ENCODE measurements at regions of chr19 and their contacts with region 1.

Region 1: GRCh38 chr19:46860125-46860845 is 512 bp upstream of the ARHGAP35 start:
- DNase-seq: peak; percentile 98
- H3K4me3 ChIP-seq: peak overlapping the region; percentile 92 to 99
- H3K27ac ChIP-seq: peak overlapping the region; percentile 95 to 98
- H3K4me1 ChIP-seq: peaks cover 21% of the 10 kb centered on the region
- H3K27me3 ChIP-seq: no peaks in the 10 kb centered on the region
- CTCF ChIP-seq: peak in 1 of 4 experiments; percentile 22
- POLR2A ChIP-seq: peak; percentile 40

Region 2: DNA sequence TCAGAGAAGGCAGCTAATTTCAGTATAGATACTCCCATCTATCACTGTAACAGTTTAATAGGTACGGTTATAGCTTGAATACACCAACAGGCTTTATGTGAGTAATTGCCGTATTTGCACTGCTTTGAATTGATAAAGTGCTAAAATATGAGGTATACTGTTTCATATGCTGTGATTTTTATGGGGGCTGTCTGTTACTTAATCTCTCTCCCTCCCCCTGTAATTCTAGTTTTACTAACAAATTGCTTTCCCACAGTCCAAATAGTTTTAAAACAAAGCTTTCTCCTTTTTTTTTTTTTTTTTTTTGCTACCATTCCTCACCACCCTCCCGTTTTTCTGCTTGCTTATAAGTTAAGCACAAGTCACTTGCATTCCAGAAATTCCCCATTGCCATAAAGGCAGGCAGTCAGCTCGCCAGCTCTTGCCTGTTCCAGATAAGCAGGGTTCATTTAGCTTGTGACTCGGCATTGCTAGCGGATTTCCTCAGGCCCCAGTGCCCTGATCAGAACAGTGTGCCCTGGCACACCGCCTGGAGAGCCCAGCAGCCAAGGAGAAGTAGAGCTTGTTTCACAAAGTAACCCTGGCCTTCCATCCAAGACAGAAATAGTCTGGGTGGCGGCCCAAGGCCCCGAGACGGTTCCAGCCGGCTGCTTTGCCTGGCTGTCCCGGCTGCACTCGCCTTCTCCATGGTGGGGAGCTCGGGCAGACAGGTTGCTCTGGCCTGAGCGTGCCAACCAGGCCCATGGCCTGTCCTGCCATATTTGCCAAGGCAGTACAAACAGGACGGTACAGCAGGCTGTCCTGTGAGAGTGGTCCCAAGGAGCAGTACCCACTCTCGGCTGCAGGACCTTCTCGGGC is 115.9 kb after region 1 on chr19:
- intact Hi-C with region 1: loop called (anchors 5 kb)
- DNase-seq: peak; percentile 95
- H3K4me3 ChIP-seq: no peak overlapping the region
- H3K27ac ChIP-seq: peak overlapping the region; percentile 70 to 71
- H3K4me1 ChIP-seq: peaks cover 33% of the 10 kb centered on the region
- H3K27me3 ChIP-seq: no peaks in the 10 kb centered on the region
- CTCF ChIP-seq: peak in 1 of 4 experiments; percentile 2
- POLR2A ChIP-seq: no peak

Region 3: DNA sequence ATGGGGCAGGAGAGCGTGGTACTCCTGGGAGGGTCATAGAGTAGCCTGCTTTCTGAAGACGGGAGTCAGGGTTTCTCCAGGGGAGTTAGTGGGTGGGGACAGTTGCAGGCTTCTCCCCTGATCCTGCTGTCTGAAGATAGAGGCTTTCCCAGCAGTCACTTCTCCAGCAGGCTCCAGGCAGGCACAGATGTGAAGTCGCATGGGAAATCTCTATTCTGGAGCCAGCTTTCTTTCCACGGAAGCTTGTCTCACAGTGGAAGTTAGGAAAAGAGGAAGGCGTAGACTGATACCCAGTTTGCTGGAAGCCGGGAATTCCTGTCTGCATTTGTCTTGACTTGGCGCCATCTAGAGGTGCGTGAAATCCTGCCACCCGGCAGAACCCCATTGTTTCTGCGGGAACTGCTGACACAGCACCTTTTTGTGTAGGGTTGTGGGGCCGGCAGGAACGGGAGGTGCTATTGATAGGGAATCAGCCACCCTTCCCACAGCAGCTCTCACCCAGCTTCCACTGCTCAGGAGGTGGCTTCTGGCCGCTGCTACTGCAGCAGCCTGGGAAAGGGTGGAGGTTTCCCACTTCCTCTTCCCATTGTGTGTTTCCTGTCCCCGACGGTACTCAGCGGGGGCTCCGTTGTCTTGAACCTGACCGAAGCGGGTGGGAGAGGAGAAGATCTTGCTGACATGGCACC is 130.8 kb after region 1 on chr19:
- intact Hi-C with region 1: loop called (anchors 2 kb)
- DNase-seq: peak; percentile 81
- H3K4me3 ChIP-seq: no peak overlapping the region
- H3K27ac ChIP-seq: peak overlapping the region; percentile 40 to 45
- H3K4me1 ChIP-seq: no peaks in the 10 kb centered on the region
- H3K27me3 ChIP-seq: no peaks in the 10 kb centered on the region
- CTCF ChIP-seq: peak; percentile 42 to 95 (median 88)
- POLR2A ChIP-seq: no peak

Region 4: GRCh38 chr19:47109541-47110375 is 249.5 kb after region 1 on chr19:
- intact Hi-C with region 1: loop called (anchors 5 kb)
- DNase-seq: no peak
- H3K4me3 ChIP-seq: peak overlapping the region; percentile 79 to 95
- H3K27ac ChIP-seq: peak overlapping the region; percentile 100
- H3K4me1 ChIP-seq: peaks cover 2% of the 10 kb centered on the region
- H3K27me3 ChIP-seq: no peaks in the 10 kb centered on the region
- CTCF ChIP-seq: no peak
- POLR2A ChIP-seq: peak; percentile 54

Measured in prostate gland (tissue), 2 donors.